ENCODE measurements at regions of chr10 and their contacts with region 1.

Region 1: GRCh38 chr10:30783939-30784500 is 154.5 kb upstream of the LYZL2 start:
- DNase-seq: peak; percentile 19
- ATAC-seq: peak; percentile 88
- H3K4me3 ChIP-seq: no peak overlapping the region
- H3K27ac ChIP-seq: no peak overlapping the region
- H3K4me1 ChIP-seq: no peaks in the 10 kb centered on the region; a peak in 1 of 4 replicates
- H3K27me3 ChIP-seq: peaks cover 2% of the 10 kb centered on the region; the same call in 1 of the 2 replicates
- CTCF ChIP-seq: peak; percentile 59 to 89 (median 83); a peak in 5 of 6 replicates
- POLR2A ChIP-seq: no peak
- RAD21 ChIP-seq: peak; percentile 88

Region 2: GRCh38 chr10:31479752-31480151 is 695.7 kb after region 1 on chr10:
- CTCF ChIA-PET with region 1: no interaction called
- POLR2A ChIA-PET with region 1: no interaction called
- RAD21 ChIA-PET with region 1: no interaction called
- intact Hi-C with region 1: loop called (anchors 10 kb)
- DNase-seq: no peak
- ATAC-seq: no peak
- H3K4me3 ChIP-seq: no peak overlapping the region
- H3K27ac ChIP-seq: no peak overlapping the region
- H3K4me1 ChIP-seq: no peaks in the 10 kb centered on the region
- H3K27me3 ChIP-seq: no peaks in the 10 kb centered on the region
- CTCF ChIP-seq: no peak
- POLR2A ChIP-seq: no peak
- RAD21 ChIP-seq: no peak

Region 3: GRCh38 chr10:31770307-31770902 is 986.4 kb after region 1 on chr10:
- CTCF ChIA-PET with region 1: no interaction called
- POLR2A ChIA-PET with region 1: no interaction called
- RAD21 ChIA-PET with region 1: no interaction called
- intact Hi-C with region 1: loop called (anchors 2 kb)
- DNase-seq: no peak
- ATAC-seq: peak; percentile 90
- H3K4me3 ChIP-seq: no peak overlapping the region
- H3K27ac ChIP-seq: no peak overlapping the region
- H3K4me1 ChIP-seq: peaks cover 8 to 19% of the 10 kb centered on the region in 2 experiments; a peak in 3 of 4 replicates
- H3K27me3 ChIP-seq: no peaks in the 10 kb centered on the region
- CTCF ChIP-seq: peak; percentile 43 to 95 (median 93); a peak in 5 of 6 replicates
- POLR2A ChIP-seq: no peak
- RAD21 ChIP-seq: peak; percentile 80